Uterus (tissue), 4 donors: ENCODE measurements at regions of chr17 and their contacts with region 1.

Region 1: DNA sequence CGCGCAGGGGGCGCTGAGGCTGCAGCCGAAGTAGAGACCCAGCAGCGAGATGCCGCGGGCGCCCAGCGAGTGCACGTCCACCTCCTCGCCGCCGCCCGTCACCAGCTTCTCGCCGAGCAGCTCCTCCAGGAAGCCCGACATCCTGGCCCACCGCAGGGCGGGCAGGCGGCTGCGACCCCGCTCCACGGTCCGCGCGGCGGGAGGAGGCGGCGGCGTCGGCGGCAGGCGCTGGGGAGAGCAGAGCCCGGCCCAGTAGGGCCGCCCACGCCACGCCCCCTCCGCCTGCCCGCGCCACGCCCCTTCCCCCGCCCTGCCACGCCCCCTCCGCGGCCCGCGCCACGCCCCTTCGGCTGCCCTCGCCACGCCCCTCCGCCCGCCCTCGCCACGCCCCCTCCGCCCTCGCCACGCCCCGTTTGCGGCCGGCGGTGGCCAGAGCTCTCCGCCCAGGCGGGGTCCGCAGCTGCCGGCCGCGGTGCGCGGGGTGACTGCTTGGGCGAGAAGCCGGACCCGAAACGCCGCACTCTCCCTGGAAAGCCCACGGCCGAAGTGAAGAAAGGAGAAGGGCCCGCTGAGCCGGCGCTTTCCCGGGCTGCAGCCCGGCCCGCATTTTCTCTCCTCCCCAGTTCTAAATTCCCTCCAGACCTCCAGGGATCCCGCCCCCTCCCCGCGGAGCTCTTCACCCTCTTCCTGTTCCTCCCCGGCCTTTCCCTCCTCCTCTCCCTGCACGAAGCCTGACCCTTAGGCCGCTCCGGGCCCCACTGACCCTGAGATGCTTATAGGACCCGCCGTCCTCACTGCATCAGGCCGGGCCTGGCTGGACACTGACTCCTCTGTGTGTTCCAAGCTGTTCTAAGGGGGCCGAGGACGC is at the start of gene NXN:
- DNase-seq: peak; percentile 83 to 89
- H3K4me3 ChIP-seq: peak within 1 kb of the TSS; percentile 54
- H3K27ac ChIP-seq: peak within 1 kb of the TSS; percentile 78 to 84
- H3K4me1 ChIP-seq: peaks cover 0 to 4% of the 10 kb centered on the region in 2 donors
- H3K27me3 ChIP-seq: no peaks in the 10 kb centered on the region
- CTCF ChIP-seq: peak in 3 of 4 experiments; percentile 40 to 41 (median 41)
- POLR2A ChIP-seq: peak; percentile 71 to 91
- total RNA-seq, gene NXN: 6.5 to 99.0 (median 49.9) TPM

Region 2: GRCh38 chr17:794876-795275 is 184.9 kb before region 1 on chr17:
- intact Hi-C with region 1: loop called (anchors 5 kb)
- DNase-seq: peak; percentile 84 to 86
- H3K4me3 ChIP-seq: no peak overlapping the region
- H3K27ac ChIP-seq: peak overlapping the region; percentile 62 to 69
- H3K4me1 ChIP-seq: no peaks in the 10 kb centered on the region
- H3K27me3 ChIP-seq: no peaks in the 10 kb centered on the region
- CTCF ChIP-seq: peak; percentile 76 to 96 (median 88)
- POLR2A ChIP-seq: peak; percentile 13 to 29

Region 3: GRCh38 chr17:879549-880442 is 100.0 kb before region 1 on chr17:
- intact Hi-C with region 1: loop called (anchors 10 kb)
- DNase-seq: peak; percentile 86 to 87
- H3K4me3 ChIP-seq: no peak overlapping the region
- H3K27ac ChIP-seq: peak overlapping the region; percentile 86 to 92
- H3K4me1 ChIP-seq: peaks cover 15 to 29% of the 10 kb centered on the region in 2 donors
- H3K27me3 ChIP-seq: no peaks in the 10 kb centered on the region
- CTCF ChIP-seq: peak; percentile 58 to 72 (median 64)
- POLR2A ChIP-seq: no peak